ENCODE measurements at regions of chr7 and their contacts with region 1.

Region 1: DNA sequence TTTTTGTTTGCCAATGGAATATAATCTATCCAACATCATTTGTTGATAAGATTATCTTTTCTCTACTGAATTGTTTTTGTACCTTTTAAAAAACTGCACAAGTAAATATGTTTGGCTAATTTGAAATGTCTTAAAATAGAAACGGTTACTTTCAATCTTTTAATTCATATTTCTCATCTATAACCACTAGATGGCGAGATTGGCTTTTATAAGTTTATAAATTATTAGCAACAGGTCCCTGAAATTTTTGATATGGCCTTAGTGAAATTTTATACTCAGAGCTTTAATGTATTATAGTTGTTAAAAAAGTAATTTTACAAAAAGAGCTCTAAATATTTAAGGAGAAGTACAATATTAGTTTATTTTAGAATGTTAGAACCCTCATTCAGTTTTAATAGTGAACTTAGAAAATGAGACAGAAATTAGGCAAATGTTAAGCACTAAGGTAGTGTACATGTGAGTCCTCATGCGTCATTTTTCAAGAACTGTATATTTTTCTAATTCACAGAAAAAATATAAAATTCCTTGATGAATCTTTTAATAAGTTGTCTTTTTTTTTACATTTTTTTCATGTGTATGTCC is 592.5 kb downstream of the ARL4A start:
- DNase-seq: peak; percentile 3
- H3K4me3 ChIP-seq: no peak overlapping the region
- H3K27ac ChIP-seq: no peak overlapping the region
- H3K27me3 ChIP-seq: no peaks in the 10 kb centered on the region
- CTCF ChIP-seq: peak; percentile 33

Region 2: DNA sequence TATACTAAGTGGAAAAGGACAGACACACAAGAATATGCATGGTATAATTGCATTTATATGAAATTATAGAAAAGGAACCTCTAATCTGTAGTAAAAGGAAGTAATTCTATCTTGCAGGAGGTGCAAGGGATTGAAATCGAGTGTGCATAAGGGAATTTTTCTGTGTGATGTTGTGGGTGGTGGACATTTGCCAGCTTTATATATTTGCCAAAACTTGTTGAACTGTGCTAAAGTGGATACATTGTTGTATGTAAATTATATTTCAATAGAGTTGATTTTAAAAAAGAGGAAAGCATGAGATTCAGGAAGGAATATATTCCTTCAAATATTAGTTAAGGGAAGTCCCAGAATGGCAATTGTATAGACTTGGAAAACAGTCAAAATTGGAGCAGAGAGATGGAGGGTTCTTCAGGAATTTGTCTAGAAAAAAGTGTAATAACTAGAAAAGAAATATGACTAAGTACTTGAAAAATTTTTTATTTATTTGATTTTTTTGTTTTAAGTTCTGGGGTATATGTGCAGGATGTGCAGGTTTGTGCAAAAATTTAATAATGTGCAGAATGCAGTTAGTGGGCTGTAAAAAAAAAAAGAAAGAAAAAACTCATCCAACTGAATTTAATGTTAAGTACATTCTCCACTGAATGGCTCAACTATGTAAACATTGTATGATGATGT is 496.4 kb before region 1 on chr7:
- CTCF ChIA-PET with region 1: no interaction called
- POLR2A ChIA-PET with region 1: no interaction called
- DNase-seq: no peak
- H3K4me3 ChIP-seq: no peak overlapping the region
- H3K27ac ChIP-seq: no peak overlapping the region
- H3K27me3 ChIP-seq: no peaks in the 10 kb centered on the region
- CTCF ChIP-seq: no peak

Region 3: GRCh38 chr7:13262929-13263530 is 16.9 kb before region 1 on chr7:
- CTCF ChIA-PET with region 1: interaction called, 13 read pairs
- POLR2A ChIA-PET with region 1: no interaction called
- DNase-seq: peak; percentile 24
- H3K4me3 ChIP-seq: no peak overlapping the region
- H3K27ac ChIP-seq: no peak overlapping the region
- H3K27me3 ChIP-seq: no peaks in the 10 kb centered on the region
- CTCF ChIP-seq: peak; percentile 61

Region 4: DNA sequence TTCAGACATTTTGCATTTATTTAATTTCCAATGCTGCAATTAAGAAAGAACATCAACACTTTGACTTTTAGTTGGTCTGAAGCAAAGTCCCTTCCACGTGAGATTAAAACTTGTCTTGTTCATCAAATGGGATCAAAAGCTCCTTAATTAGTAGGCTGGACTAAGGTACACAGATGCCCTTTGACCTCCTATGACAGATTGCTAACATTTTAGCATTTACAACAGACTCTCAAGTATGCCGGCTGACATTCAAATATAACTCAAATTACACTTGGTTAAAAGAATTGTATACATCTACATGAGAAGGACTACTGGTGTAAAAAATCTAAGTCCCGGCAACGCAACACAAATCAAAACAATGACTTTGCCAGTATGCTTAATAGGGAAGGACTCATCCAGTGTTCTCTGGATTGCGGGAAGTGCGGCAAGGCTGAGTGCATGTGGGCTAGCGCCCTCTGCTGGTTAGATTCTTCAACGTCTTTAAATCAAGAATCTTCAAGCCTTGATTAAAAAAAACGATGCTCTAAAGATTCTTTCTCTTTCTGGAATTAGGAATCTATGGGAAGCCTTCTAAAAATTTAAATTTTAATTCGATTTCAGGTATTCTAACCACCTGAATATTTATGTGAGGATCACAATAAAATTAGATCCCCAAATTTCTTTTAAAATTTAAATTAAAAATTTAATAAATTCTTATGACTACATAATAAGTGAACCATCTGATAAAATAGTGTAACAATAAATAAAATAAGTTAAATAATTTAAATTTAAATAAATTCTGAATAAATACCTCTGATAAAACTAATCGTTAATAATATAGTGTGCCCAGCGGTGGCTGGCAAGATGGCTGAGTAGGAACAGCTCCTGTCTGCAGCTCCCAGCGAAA is 1177.9 kb after region 1 on chr7:
- CTCF ChIA-PET with region 1: interaction called, 85 read pairs
- POLR2A ChIA-PET with region 1: no interaction called
- DNase-seq: peak; percentile 70
- H3K4me3 ChIP-seq: no peak overlapping the region
- H3K27ac ChIP-seq: no peak overlapping the region
- H3K27me3 ChIP-seq: no peaks in the 10 kb centered on the region
- CTCF ChIP-seq: peak; percentile 92